ENCODE measurements at regions of chr2 and their contacts with region 1.

Region 1: GRCh38 chr2:207529330-207530159 is at the start of gene CREB1:
- DNase-seq: peak; percentile 89 to 95 (median 91)
- ATAC-seq: peak; percentile 90
- H3K4me3 ChIP-seq: peak within 1 kb of the TSS; percentile 74
- H3K27ac ChIP-seq: peak within 1 kb of the TSS; percentile 93
- H3K4me1 ChIP-seq: peaks cover 10 to 14% of the 10 kb centered on the region in 2 experiments; a peak in 4 of 5 replicates
- H3K27me3 ChIP-seq: no peaks in the 10 kb centered on the region
- CTCF ChIP-seq: peak in 1 of 3 experiments; percentile 17; a peak in 2 of 6 replicates
- EP300 ChIP-seq: no peak
- POLR2A ChIP-seq: peak; percentile 92
- RAD21 ChIP-seq: no peak
- polyA plus RNA-seq, gene CREB1: 8.9 to 14.7 TPM

Region 2: GRCh38 chr2:207484444-207485391 is 44.8 kb before region 1 on chr2:
- CTCF ChIA-PET with region 1: no interaction called
- POLR2A ChIA-PET with region 1: no interaction called
- in situ Hi-C with region 1: no loop called
- intact Hi-C with region 1: loop called (anchors 5 kb)
- DNase-seq: no peak
- ATAC-seq: no peak
- H3K4me3 ChIP-seq: no peak overlapping the region
- H3K27ac ChIP-seq: no peak overlapping the region
- H3K4me1 ChIP-seq: peaks cover 0 to 6% of the 10 kb centered on the region in 2 experiments; a peak in 3 of 5 replicates
- H3K27me3 ChIP-seq: no peaks in the 10 kb centered on the region
- CTCF ChIP-seq: no peak
- EP300 ChIP-seq: no peak
- POLR2A ChIP-seq: no peak
- RAD21 ChIP-seq: no peak

Region 3: DNA sequence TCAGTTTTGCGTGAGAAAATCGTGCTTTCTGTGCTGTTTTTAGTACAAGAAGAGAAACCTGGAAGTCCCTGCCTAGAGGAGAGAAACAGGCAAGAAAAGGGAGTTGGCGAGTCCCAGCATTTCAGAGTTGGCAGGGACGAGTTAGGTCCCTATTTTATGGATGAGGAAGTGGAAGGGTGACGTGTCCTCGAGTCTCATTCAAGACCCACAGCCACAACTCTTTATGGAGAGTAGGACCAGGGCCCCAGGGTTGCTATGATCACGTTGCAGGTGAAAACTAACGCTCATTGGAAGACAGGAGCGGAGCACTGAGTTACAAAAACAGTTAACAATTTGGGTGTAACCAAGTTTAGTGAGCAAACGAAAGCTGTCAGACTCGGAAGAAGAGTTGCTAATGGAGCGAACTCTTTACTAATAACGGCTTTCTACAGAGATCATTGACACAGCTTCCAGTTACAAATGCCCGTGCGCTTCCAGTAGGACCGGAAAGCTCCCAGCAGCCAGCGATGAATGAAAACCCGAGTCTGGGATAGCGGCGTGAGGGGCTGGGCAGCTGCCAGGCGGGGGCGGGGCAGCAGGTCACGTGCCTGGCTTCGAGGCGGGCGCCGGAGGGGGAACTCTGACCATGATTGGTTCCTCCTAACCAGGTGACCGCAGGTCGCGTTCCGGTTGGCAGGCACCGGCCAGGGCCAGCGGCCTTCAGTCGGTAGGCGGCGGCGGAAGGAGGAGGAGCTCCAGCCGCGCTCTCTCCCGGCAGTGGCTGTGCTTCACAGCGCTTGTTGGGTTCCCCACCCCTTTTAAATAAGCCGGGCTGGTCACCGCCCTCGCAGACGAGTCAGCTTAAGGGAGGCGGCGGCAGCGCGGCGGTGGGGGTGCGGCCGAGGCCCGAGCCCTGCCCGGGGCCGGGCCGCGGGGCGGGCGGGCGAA is 181.5 kb after region 1 on chr2 and contains the start of gene CCNYL1:
- CTCF ChIA-PET with region 1: no interaction called
- POLR2A ChIA-PET with region 1: no interaction called
- in situ Hi-C with region 1: no loop called
- intact Hi-C with region 1: loop called (anchors 5 kb)
- DNase-seq: peak; percentile 96 to 99 (median 98)
- ATAC-seq: peak; percentile 99
- H3K4me3 ChIP-seq: peak within 1 kb of the TSS; percentile 69
- H3K27ac ChIP-seq: peak within 1 kb of the TSS; percentile 87
- H3K4me1 ChIP-seq: peaks cover 9 to 15% of the 10 kb centered on the region in 2 experiments; a peak in 4 of 5 replicates
- H3K27me3 ChIP-seq: no peaks in the 10 kb centered on the region
- CTCF ChIP-seq: no peak
- EP300 ChIP-seq: no peak
- POLR2A ChIP-seq: peak; percentile 77
- RAD21 ChIP-seq: no peak
- polyA plus RNA-seq, gene CCNYL1: 1.9 to 2.1 TPM